Left cardiac atrium (tissue), 4 donors: ENCODE measurements at regions of chr4 and their contacts with region 1.

Region 1: GRCh38 chr4:1693129-1693896 is 9.2 kb upstream of the FAM53A start:
- DNase-seq: peak; percentile 68
- ATAC-seq: peak; percentile 86 to 88

Region 2: DNA sequence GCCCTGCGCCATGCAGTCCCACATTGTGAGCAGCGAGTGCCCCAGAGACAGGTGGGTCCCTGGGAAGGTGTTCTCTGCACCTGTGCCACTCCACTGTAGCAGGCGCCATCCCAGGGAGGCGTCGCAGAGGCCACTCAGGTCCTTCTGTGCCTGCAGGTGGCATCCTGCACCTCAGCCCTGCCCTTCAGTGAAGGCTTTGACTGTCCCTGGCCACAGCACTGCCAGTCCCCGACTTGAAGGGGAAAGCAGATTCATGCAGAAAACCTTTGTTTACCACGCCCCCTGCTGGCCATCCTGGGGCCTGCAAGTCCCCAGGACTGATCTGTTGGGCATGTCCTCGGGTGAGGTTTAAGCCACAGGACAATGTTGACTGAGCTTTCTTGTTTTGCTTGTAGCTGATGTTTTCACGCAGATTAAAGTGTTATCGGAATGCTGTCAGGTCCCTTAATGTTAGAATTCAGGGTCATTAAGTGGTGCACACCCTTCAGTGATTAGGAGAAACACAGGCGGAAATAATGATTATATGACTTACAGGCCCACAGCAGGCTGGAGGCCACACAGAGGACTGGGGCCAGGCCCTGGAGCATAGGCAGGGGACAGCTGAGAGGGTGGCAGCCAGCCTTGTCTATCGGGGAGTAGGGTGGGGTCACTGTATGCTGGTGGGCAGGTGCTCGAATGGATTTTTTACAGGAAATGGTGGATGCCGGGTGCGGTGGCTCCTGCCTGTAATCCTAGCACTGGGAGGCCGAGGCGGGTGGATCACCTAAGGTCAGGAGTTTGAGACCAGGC is 33.0 kb after region 1 on chr4:
- intact Hi-C with region 1: loop called (anchors 1 to 5 kb)
- DNase-seq: peak; percentile 88
- ATAC-seq: peak; percentile 48 to 53